H1 (cell line): ENCODE measurements at regions of chr1 and their contacts with region 1.

Region 1: GRCh38 chr1:175174309-175175165 is 18.0 kb downstream of the KIAA0040 start:
- DNase-seq: no peak
- H3K4me3 ChIP-seq: no peak overlapping the region
- H3K27ac ChIP-seq: no peak overlapping the region
- H3K4me1 ChIP-seq: no peaks in the 10 kb centered on the region
- H3K27me3 ChIP-seq: no peaks in the 10 kb centered on the region
- CTCF ChIP-seq: no peak
- EP300 ChIP-seq: no peak
- POLR2A ChIP-seq: no peak
- RAD21 ChIP-seq: no peak

Region 2: GRCh38 chr1:174953285-174954072 is 221.1 kb before region 1 on chr1:
- CTCF ChIA-PET with region 1: no interaction called
- POLR2A ChIA-PET with region 1: no interaction called
- DNase-seq: no peak
- H3K4me3 ChIP-seq: no peak overlapping the region
- H3K27ac ChIP-seq: no peak overlapping the region
- H3K4me1 ChIP-seq: peaks cover 0 to 4% (median 1%) of the 10 kb centered on the region in 4 experiments; a peak in 3 of 7 replicates
- H3K27me3 ChIP-seq: no peaks in the 10 kb centered on the region
- CTCF ChIP-seq: no peak
- EP300 ChIP-seq: no peak
- POLR2A ChIP-seq: no peak
- RAD21 ChIP-seq: no peak

Region 3: DNA sequence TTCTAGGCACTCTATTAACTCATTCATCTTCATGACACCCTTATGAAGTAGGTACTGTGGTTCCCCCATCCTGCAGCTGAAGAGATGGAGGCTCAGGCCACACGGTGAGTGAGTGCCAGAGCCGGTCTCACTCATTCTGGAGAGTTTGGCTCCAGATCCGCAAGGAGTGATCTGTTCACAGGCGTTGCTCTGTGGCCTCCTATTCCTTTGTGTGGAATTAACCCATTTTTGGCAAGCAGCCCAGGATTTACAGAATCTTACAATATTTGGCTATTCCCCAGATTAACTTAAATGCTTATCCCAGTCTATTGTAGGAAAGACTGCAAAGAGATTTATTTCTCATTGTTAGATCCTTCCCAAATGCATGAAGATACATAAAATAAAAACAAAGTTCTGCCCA is 11.6 kb before region 1 on chr1:
- CTCF ChIA-PET with region 1: interaction called, 15 read pairs
- POLR2A ChIA-PET with region 1: interaction called, 3 read pairs
- DNase-seq: no peak
- H3K4me3 ChIP-seq: no peak overlapping the region
- H3K27ac ChIP-seq: no peak overlapping the region
- H3K4me1 ChIP-seq: no peaks in the 10 kb centered on the region
- H3K27me3 ChIP-seq: no peaks in the 10 kb centered on the region
- CTCF ChIP-seq: no peak
- EP300 ChIP-seq: no peak
- POLR2A ChIP-seq: no peak
- RAD21 ChIP-seq: no peak

Region 4: DNA sequence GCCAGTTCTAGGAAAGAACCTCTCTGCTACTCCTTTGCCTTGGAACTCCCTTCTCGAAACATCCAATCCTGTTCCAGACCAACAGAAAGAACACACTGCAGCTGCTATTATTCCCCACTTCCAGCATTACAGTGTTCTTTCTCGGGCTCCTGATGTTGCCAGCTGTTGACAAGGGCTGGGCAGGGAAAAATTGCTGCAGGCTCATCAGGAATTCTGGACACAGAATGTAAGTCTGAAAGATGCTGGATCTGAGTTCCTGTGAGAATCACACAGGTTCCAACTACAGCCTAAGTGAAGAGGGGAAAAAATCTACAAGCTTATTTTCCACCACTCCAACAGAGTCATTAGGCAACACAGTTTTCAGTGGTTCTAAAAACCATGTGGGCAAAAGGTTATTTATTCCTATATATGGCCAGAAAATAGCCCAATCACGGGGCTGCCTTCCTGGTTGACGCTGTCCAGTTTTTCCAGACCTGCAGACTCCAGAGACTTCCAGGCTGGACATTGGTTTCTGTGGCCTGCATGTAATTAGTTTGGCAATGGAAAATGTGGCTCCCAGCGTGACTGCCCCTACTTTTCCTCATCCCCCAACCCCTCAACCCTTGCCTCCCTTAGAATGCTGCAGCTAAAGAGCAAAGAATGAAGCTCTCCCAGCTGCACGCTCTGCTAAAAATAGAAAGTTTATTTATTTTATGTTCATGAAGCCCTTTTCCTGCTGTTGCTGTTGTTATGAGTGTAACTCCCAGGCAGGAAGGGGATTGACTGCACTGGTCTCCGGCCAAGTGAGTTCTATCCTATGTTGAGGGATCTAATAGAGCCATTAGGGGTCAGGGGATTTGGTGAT is 26.4 kb after region 1 on chr1:
- CTCF ChIA-PET with region 1: no interaction called
- POLR2A ChIA-PET with region 1: no interaction called
- DNase-seq: no peak
- H3K4me3 ChIP-seq: no peak overlapping the region
- H3K27ac ChIP-seq: no peak overlapping the region
- H3K4me1 ChIP-seq: no peaks in the 10 kb centered on the region; a peak in 1 of 7 replicates
- H3K27me3 ChIP-seq: no peaks in the 10 kb centered on the region
- CTCF ChIP-seq: no peak
- EP300 ChIP-seq: no peak
- POLR2A ChIP-seq: no peak
- RAD21 ChIP-seq: no peak